CD8-positive, alpha-beta T cell (primary cell): ENCODE measurements at regions of chr2 and their contacts with region 1.

Region 1: DNA sequence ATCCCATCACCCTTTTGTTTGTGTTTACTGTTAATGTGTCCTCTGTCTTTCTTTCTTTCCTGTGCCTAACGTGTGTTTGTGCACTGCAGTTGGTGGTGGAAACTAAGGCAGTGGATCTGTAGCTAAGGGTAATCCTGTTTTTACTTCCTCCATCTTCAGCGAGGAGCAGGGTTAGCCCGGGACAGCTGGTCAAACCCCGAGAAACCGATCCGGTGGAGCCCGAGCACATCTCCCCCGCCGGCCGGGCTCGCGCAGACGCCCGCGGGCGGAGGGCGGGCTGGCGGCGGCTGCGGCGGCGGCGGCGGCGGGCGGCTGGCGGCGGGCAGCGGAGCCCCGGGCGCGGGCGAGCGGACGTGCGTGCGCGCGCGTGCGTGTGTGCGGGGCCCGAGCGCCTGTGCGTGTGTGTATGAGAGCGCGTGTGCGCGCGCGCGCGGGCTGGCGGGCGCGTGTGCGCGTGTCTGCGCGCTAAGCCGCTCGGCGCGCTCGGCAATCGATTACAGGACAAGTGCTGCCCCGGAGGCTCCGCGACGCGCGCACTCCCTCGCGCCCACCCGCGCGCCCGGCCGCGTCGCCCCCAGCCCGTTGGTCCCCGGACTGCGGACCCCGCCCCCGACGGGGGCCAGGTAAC is at the start of gene IKZF2:
- DNase-seq: peak; percentile 35 to 93 (median 75)
- ATAC-seq: peak; percentile 66
- H3K4me3 ChIP-seq: peak within 1 kb of the TSS; percentile 66 to 67
- H3K4me3 Mint-ChIP-seq: peak within 1 kb of the TSS; percentile 90
- H3K27ac ChIP-seq: peak within 1 kb of the TSS; percentile 65 to 82
- H3K27ac Mint-ChIP-seq: peak within 1 kb of the TSS; percentile 91
- H3K4me1 ChIP-seq: peaks cover 12% of the 10 kb centered on the region
- H3K4me1 Mint-ChIP-seq: peaks cover 52% of the 10 kb centered on the region
- H3K27me3 ChIP-seq: no peaks in the 10 kb centered on the region
- H3K27me3 Mint-ChIP-seq: no peaks in the 10 kb centered on the region
- CTCF ChIP-seq: no peak
- total RNA-seq, gene IKZF2: 11.2 to 14.6 TPM

Region 2: DNA sequence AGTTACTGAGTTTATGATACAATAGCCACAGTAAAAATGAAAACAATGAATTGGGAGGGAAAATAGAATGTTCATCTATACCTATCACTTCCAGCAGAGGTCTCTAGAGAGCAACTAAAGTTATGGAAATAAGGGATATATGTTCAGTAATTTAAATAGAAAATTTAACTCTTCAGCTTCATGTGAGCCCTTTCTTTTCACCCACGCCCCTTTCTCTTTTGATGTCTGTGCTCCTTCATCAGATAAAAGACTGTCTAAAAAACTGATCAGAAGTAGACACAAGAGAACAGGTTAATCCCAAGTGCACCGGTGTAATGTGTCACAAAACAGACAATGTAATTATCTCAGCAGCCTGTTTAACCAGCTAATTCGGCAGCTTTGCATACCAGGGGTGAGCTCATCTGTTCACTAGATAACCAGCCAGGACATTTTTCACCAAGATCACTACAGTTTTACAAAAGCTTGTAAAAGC is 374.5 kb before region 1 on chr2:
- CTCF ChIA-PET with region 1: interaction called, 44 read pairs
- POLR2A ChIA-PET with region 1: interaction called, 10 read pairs
- intact Hi-C with region 1: loop called (anchors 1 kb)
- DNase-seq: peak in 2 of 9 experiments; percentile 37 to 49
- ATAC-seq: peak; percentile 57
- H3K4me3 ChIP-seq: no peak overlapping the region
- H3K4me3 Mint-ChIP-seq: no peak overlapping the region
- H3K27ac ChIP-seq: no peak overlapping the region
- H3K27ac Mint-ChIP-seq: no peak overlapping the region
- H3K4me1 ChIP-seq: no peaks in the 10 kb centered on the region
- H3K4me1 Mint-ChIP-seq: peaks cover 3% of the 10 kb centered on the region
- H3K27me3 ChIP-seq: no peaks in the 10 kb centered on the region
- H3K27me3 Mint-ChIP-seq: no peaks in the 10 kb centered on the region
- CTCF ChIP-seq: peak; percentile 81

Region 3: DNA sequence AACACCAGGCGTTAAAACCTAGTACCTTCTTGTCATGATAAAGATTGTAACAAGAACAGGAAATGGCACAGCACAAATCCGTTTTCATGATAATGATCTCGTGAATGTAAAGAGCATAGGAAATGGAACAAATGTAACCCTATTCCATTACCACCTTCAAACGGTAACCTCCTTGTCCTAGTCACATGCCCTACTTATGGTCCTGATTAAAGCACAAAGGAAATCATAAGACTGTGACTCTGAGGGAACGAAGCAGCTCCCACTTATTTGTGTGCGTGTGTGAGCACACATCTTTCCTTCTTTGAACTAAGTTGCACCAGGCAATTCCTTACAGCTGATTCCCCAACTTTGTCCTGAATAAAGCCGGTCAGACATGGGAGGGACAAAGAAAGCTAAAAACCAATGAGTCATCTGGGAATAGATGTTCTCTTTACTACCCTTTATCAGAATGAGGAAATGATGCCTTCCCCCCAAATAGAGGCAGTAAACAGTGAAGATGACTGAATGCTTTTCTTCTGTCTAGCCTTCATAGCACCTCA is 192.7 kb before region 1 on chr2:
- CTCF ChIA-PET with region 1: no interaction called
- POLR2A ChIA-PET with region 1: no interaction called
- intact Hi-C with region 1: loop called (anchors 5 kb)
- DNase-seq: peak in 2 of 9 experiments; percentile 30 to 43
- ATAC-seq: peak; percentile 55
- H3K4me3 ChIP-seq: no peak overlapping the region
- H3K4me3 Mint-ChIP-seq: peak overlapping the region; percentile 65
- H3K27ac ChIP-seq: peak overlapping the region in 1 of 2 experiments; percentile 11
- H3K27ac Mint-ChIP-seq: peak overlapping the region; percentile 75
- H3K4me1 ChIP-seq: peaks cover 3% of the 10 kb centered on the region
- H3K4me1 Mint-ChIP-seq: peaks cover 45% of the 10 kb centered on the region
- H3K27me3 ChIP-seq: no peaks in the 10 kb centered on the region
- H3K27me3 Mint-ChIP-seq: no peaks in the 10 kb centered on the region
- CTCF ChIP-seq: no peak

Region 4: GRCh38 chr2:213104092-213104902 is 47.3 kb before region 1 on chr2:
- CTCF ChIA-PET with region 1: interaction called, 3 read pairs
- POLR2A ChIA-PET with region 1: interaction called, 3 read pairs
- intact Hi-C with region 1: loop called (anchors 2 to 5 kb)
- DNase-seq: peak in 2 of 9 experiments; percentile 45 to 64
- ATAC-seq: peak; percentile 73
- H3K4me3 ChIP-seq: peak overlapping the region in 1 of 2 experiments; percentile 29
- H3K4me3 Mint-ChIP-seq: peak overlapping the region; percentile 75
- H3K27ac ChIP-seq: peak overlapping the region in 1 of 2 experiments; percentile 46
- H3K27ac Mint-ChIP-seq: peak overlapping the region; percentile 78
- H3K4me1 ChIP-seq: peaks cover 19% of the 10 kb centered on the region
- H3K4me1 Mint-ChIP-seq: peaks cover 73% of the 10 kb centered on the region
- H3K27me3 ChIP-seq: no peaks in the 10 kb centered on the region
- H3K27me3 Mint-ChIP-seq: no peaks in the 10 kb centered on the region
- CTCF ChIP-seq: no peak

Region 5: GRCh38 chr2:213125646-213126347 is 25.8 kb before region 1 on chr2:
- CTCF ChIA-PET with region 1: interaction called, 15 read pairs
- POLR2A ChIA-PET with region 1: interaction called, 15 read pairs
- intact Hi-C with region 1: no loop called
- DNase-seq: peak in 2 of 9 experiments; percentile 57 to 67
- ATAC-seq: peak; percentile 81
- H3K4me3 ChIP-seq: no peak overlapping the region
- H3K4me3 Mint-ChIP-seq: no peak overlapping the region
- H3K27ac ChIP-seq: peak overlapping the region in 1 of 2 experiments; percentile 23
- H3K27ac Mint-ChIP-seq: no peak overlapping the region
- H3K4me1 ChIP-seq: peaks cover 9% of the 10 kb centered on the region
- H3K4me1 Mint-ChIP-seq: peaks cover 67% of the 10 kb centered on the region
- H3K27me3 ChIP-seq: no peaks in the 10 kb centered on the region
- H3K27me3 Mint-ChIP-seq: no peaks in the 10 kb centered on the region
- CTCF ChIP-seq: peak; percentile 13

Region 6: GRCh38 chr2:213284105-213285090 is 132.8 kb after region 1 on chr2 and contains the start of gene SPAG16:
- CTCF ChIA-PET with region 1: interaction called, 5 read pairs
- POLR2A ChIA-PET with region 1: interaction called, 5 read pairs
- intact Hi-C with region 1: loop called (anchors 2 to 5 kb)
- DNase-seq: peak; percentile 89 to 98 (median 95)
- ATAC-seq: peak; percentile 97
- H3K4me3 ChIP-seq: peak within 1 kb of the TSS; percentile 81 to 84
- H3K4me3 Mint-ChIP-seq: peak within 1 kb of the TSS; percentile 94
- H3K27ac ChIP-seq: peak within 1 kb of the TSS; percentile 39 to 74
- H3K27ac Mint-ChIP-seq: peak within 1 kb of the TSS; percentile 95
- H3K4me1 ChIP-seq: peaks cover 11% of the 10 kb centered on the region
- H3K4me1 Mint-ChIP-seq: peaks cover 47% of the 10 kb centered on the region
- H3K27me3 ChIP-seq: no peaks in the 10 kb centered on the region
- H3K27me3 Mint-ChIP-seq: no peaks in the 10 kb centered on the region
- CTCF ChIP-seq: no peak
- total RNA-seq, gene SPAG16: 3.7 to 4.6 TPM